ENCODE measurements at regions of chr10 and their contacts with region 1.

Region 1: DNA sequence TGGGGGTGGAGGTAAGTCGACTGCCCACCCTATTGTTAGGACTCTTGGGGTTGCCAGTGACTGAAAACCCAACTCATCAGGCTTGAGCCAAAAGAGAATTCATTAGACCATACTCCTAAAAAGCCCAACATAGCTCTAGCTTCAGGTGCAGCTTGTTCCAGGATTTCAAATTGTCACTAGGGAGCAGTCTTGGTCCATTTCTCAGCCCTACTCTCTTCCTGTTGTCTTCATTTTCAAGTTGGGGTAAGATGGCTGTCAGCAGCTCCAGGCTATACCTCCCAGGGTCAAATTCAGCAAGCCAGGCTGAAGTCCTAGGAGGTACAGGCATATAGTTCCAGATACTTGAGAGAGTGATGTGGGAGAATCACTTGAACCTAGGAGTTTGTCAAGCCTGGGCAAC is 14.9 kb upstream of the COL13A1 start:
- DNase-seq: no peak
- ATAC-seq: no peak
- H3K4me3 ChIP-seq: no peak overlapping the region
- H3K4me3 Mint-ChIP-seq: no peak overlapping the region
- H3K27ac ChIP-seq: no peak overlapping the region
- H3K27ac Mint-ChIP-seq: no peak overlapping the region
- H3K4me1 ChIP-seq: no peaks in the 10 kb centered on the region
- H3K4me1 Mint-ChIP-seq: peaks cover 0 to 3% (median 0%) of the 10 kb centered on the region in 7 donors
- H3K27me3 ChIP-seq: no peaks in the 10 kb centered on the region
- H3K27me3 Mint-ChIP-seq: peaks cover 0 to 20% (median 3%) of the 10 kb centered on the region in 5 donors

Region 2: DNA sequence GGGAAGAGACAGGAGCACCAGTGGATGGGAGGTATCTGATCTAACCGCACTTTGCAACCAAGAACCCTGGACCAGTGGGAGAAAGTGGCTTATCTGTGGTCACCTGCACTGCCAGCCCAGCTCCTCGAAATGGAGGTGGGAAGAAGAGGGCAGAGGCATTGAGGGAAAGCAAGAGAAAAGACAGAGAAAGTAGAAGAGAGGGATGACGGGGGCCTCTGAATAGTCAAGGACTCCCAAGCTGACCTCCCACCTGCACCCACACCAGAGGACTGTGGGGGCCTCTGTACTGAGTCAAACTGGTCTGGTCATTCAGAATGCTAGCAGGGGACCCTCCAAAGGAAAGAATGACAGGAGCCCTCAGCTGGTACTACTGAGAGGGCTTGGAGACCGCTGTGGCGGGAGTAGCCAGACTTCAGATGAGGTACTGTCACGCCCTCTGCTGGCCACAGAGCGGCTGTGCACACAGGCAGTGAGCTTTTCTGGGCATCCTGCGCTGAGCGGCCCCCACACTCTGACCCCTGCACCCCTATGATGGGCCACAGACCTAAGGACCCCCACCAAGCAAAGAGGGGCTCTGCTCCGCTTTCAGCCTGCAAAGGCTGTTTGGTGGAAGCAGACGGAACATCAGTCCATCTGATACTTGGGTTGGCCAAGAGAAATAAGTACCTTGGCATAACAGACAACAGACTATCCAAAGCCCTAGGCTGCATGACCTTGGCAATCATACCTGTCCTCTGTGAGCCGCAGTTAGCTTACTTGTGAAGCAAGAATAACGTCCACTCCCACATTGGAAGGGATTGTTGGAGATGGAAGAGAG is 127.8 kb after region 1 on chr10:
- CTCF ChIA-PET with region 1: no interaction called
- POLR2A ChIA-PET with region 1: no interaction called
- intact Hi-C with region 1: loop called in 1 of 2 experiments (anchors 2 kb)
- DNase-seq: peak in 8 of 9 donors; percentile 22 to 39 (median 27)
- ATAC-seq: peak; percentile 73
- H3K4me3 ChIP-seq: no peak overlapping the region
- H3K4me3 Mint-ChIP-seq: no peak overlapping the region
- H3K27ac ChIP-seq: no peak overlapping the region
- H3K27ac Mint-ChIP-seq: no peak overlapping the region
- H3K4me1 ChIP-seq: no peaks in the 10 kb centered on the region
- H3K4me1 Mint-ChIP-seq: peaks cover 0 to 5% (median 0%) of the 10 kb centered on the region in 7 donors
- H3K27me3 ChIP-seq: no peaks in the 10 kb centered on the region
- H3K27me3 Mint-ChIP-seq: peaks cover 0 to 13% (median 7%) of the 10 kb centered on the region in 5 donors

Measured in naive thymus-derived CD4-positive, alpha-beta T cell (primary cell).